ENCODE measurements at regions of chrX and their contacts with region 1.

Region 1: DNA sequence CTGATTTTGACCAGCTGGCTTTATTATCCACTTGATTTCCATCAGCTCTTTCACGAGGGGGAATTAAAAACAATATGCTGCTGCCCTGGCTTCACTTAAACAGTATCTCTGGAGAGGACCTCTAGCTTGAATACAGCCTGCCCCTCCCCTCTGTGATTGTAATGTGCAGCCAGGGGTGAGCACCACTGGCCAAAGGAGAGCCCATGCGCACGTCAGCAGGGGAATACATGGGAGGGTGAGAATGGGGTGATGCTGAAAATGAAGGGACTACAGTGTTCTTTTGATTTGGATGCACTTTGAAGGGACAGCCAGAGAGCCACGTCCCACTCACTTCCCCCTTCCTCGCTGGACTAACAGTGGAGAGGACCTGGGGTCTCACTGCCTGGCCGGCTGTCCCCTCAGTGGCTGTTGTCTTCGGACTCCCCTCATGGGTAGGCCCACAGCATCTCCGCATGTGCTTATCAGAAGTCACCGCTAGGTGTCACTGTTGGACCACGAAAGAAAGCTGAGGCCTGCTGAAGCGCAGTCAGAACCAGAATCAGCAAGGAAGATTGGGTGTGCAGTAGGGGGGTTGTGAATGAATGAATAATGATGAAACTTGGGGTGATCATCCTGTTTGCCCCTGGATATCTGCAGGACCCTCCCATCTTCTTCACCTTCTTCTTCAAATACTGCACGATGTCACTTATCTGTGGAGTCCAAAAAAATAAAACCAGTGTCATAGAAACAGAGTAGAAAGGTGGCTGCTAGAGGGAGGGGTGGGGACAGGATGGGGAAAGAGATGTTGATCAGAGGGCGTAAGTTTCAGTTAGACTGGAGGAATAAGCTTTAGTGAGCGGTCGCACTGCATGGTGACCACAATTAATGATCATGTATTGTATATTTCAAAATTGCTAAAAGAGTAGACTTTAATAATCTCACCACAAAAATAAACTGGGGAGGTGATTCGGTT is 32.8 kb downstream of the CLCN4 start:
- DNase-seq: peak in 1 of 2 donors; percentile 83
- H3K4me3 ChIP-seq: no peak overlapping the region
- H3K27ac ChIP-seq: no peak overlapping the region
- H3K4me1 ChIP-seq: peaks cover 0 to 5% of the 10 kb centered on the region in 2 donors
- H3K27me3 ChIP-seq: no peaks in the 10 kb centered on the region
- CTCF ChIP-seq: peak; percentile 80 to 88 (median 84)

Region 2: DNA sequence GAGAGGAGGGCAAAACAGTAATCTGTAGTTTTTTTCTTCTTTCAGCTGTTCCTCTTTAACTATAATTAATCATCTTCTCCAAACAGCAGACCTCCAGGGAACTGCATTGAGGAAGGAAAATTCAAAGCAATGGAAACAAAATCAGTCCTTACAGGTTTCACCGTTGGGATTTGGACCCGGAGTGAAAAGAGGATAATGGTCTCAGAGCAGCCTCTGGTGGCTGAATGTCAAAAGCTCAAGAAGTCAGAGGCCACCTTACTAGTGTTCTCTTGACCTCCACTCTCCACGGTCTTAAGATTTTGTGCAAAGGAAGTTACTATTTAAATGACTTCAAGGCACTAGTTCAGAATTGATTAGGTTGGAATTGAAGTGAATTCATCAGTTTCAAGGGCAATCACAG is 446.7 kb after region 1 on chrX:
- intact Hi-C with region 1: loop called (anchors 1 kb)
- DNase-seq: no peak
- H3K4me3 ChIP-seq: peak overlapping the region in 1 of 2 donors; percentile 31
- H3K27ac ChIP-seq: peak overlapping the region in 1 of 2 donors; percentile 44
- H3K4me1 ChIP-seq: peaks cover 0 to 2% of the 10 kb centered on the region in 2 donors
- H3K27me3 ChIP-seq: no peaks in the 10 kb centered on the region
- CTCF ChIP-seq: peak; percentile 15 to 47 (median 20)

Region 3: GRCh38 chrX:11100281-11101035 is 910.9 kb after region 1 on chrX:
- intact Hi-C with region 1: loop called (anchors 2 kb)
- DNase-seq: peak in 1 of 2 donors; percentile 70
- H3K4me3 ChIP-seq: no peak overlapping the region
- H3K27ac ChIP-seq: peak overlapping the region; percentile 35 to 42
- H3K4me1 ChIP-seq: no peaks in the 10 kb centered on the region
- H3K27me3 ChIP-seq: no peaks in the 10 kb centered on the region
- CTCF ChIP-seq: peak in 2 of 3 experiments; percentile 28 to 54

Region 4: GRCh38 chrX:11533211-11533651 is 1343.6 kb after region 1 on chrX:
- intact Hi-C with region 1: loop called (anchors 10 kb)
- DNase-seq: no peak
- H3K4me3 ChIP-seq: no peak overlapping the region
- H3K27ac ChIP-seq: no peak overlapping the region
- H3K4me1 ChIP-seq: no peaks in the 10 kb centered on the region
- H3K27me3 ChIP-seq: no peaks in the 10 kb centered on the region
- CTCF ChIP-seq: peak; percentile 74 to 87 (median 77)

Region 5: GRCh38 chrX:11770320-11770719 is 1580.7 kb after region 1 on chrX:
- intact Hi-C with region 1: loop called (anchors 5 kb)
- DNase-seq: no peak
- H3K4me3 ChIP-seq: no peak overlapping the region
- H3K27ac ChIP-seq: no peak overlapping the region
- H3K4me1 ChIP-seq: no peaks in the 10 kb centered on the region
- H3K27me3 ChIP-seq: no peaks in the 10 kb centered on the region
- CTCF ChIP-seq: peak; percentile 55 to 82 (median 74)

Measured in ascending aorta (tissue), 2 donors.